ENCODE measurements at regions of chr20 and their contacts with region 1.

Region 1: DNA sequence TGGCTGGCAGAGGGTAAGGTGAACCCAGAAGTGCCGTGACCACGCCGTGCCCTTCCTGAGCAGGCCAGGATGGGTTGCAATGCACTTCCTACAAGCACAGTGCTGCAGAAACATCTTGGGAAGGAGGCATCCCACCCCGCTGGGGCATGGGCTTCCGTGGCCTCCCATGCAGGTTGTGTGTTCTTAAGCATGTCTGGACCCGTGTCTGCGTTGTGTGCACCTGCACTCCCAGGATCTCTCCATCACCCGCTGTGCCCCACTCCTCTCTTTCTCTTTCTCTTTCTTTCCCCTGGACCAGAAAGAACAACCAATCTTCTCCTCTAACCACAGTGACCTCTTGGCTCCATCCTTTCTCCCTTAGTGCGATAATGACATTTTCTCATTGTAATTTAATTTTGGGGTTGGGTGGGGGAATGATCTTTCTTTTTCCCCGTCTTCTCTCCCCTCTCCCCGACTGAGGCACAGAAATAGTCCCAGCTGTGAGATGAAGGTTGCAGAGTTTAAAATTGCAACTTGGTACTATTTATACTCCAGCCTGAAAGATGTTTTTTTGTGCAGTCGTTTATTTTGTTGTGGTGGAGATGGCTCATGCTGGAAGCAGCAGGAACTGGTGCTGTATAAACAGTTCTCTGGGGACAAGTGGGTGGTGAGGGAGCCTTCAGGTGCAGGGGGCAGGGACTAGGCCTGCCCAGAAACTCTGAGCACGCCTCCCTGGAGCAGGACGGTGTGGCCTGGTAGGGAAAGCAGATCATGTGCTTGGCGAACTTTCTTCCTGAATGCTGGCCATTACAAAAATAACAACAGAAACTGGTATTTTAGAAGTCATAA is 20.5 kb downstream of the BCAS4 start:
- DNase-seq: no peak
- ATAC-seq: peak; percentile 13
- H3K4me3 Mint-ChIP-seq: peak overlapping the region; percentile 71
- H3K27ac Mint-ChIP-seq: peak overlapping the region; percentile 85
- H3K4me1 Mint-ChIP-seq: peaks cover 64% of the 10 kb centered on the region
- H3K27me3 Mint-ChIP-seq: no peaks in the 10 kb centered on the region

Region 2: GRCh38 chr20:50844430-50845100 is 29.2 kb after region 1 on chr20:
- CTCF ChIA-PET with region 1: interaction called, 13 read pairs
- DNase-seq: peak; percentile 95
- ATAC-seq: peak; percentile 99
- H3K4me3 Mint-ChIP-seq: no peak overlapping the region
- H3K27ac Mint-ChIP-seq: peak overlapping the region; percentile 98
- H3K4me1 Mint-ChIP-seq: peaks cover 78% of the 10 kb centered on the region
- H3K27me3 Mint-ChIP-seq: no peaks in the 10 kb centered on the region

Region 3: GRCh38 chr20:50958615-50959542 is 143.5 kb after region 1 on chr20 and contains the start of gene MOCS3:
- CTCF ChIA-PET with region 1: interaction called, 13 read pairs
- DNase-seq: peak; percentile 91
- ATAC-seq: peak; percentile 79
- H3K4me3 Mint-ChIP-seq: peak within 1 kb of the TSS; percentile 93
- H3K27ac Mint-ChIP-seq: peak within 1 kb of the TSS; percentile 98
- H3K4me1 Mint-ChIP-seq: peaks cover 58% of the 10 kb centered on the region
- H3K27me3 Mint-ChIP-seq: no peaks in the 10 kb centered on the region
- total RNA-seq, gene MOCS3: 4.6 to 6.1 TPM

Measured in activated CD8-positive, alpha-beta memory T cell treated with anti-CD3 and anti-CD28 coated beads, Interleukin-2, amount 10 ng/mL, durations not matched to agents 7 days and 5 days (primary cell).